Transverse colon (tissue), 4 donors: ENCODE measurements at regions of chr20 and their contacts with region 1.

Region 1: GRCh38 chr20:20393207-20394120 is 25.6 kb downstream of the INSM1 start:
- DNase-seq: no peak
- H3K4me3 ChIP-seq: no peak overlapping the region
- H3K27ac ChIP-seq: no peak overlapping the region
- H3K4me1 ChIP-seq: no peaks in the 10 kb centered on the region
- H3K27me3 ChIP-seq: no peaks in the 10 kb centered on the region
- CTCF ChIP-seq: no peak
- EP300 ChIP-seq: no peak
- POLR2A ChIP-seq: no peak

Region 2: GRCh38 chr20:20489054-20489453 is 95.6 kb after region 1 on chr20:
- in situ Hi-C with region 1: loop called in 1 of 4 experiments (anchors 25 kb)
- intact Hi-C with region 1: no loop called
- DNase-seq: no peak
- H3K4me3 ChIP-seq: no peak overlapping the region
- H3K27ac ChIP-seq: no peak overlapping the region
- H3K4me1 ChIP-seq: no peaks in the 10 kb centered on the region
- H3K27me3 ChIP-seq: no peaks in the 10 kb centered on the region
- CTCF ChIP-seq: no peak
- EP300 ChIP-seq: no peak
- POLR2A ChIP-seq: no peak